Activated CD4-positive, alpha-beta T cell treated with anti-CD3 and anti-CD28 coated beads, Interleukin-2, amount 10 ng/mL, durations not matched to agents 24 days and 14 days (primary cell): ENCODE measurements at regions of chr4 and their contacts with region 1.

Region 1: DNA sequence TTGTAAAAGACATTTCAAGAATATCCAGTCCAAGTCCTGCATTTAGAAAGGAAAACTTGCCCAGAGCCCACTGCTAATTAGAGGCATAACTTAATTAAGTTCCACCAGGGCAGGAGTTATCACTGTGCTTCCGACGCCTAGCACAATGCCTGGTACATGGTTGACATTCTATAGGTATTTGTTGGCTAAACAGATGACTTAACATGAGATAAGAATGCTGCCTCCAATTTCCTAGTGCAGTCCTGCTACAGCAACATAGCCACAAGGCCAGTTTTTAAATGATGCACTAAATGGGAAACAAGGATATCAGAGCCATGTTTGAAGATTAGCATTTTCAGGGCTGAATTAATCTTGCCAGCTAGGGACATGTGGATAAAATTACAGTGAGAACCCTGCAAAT is 164.1 kb downstream of the RASL11B start:
- DNase-seq: no peak
- H3K4me3 Mint-ChIP-seq: no peak overlapping the region
- H3K27ac Mint-ChIP-seq: no peak overlapping the region
- H3K4me1 Mint-ChIP-seq: no peaks in the 10 kb centered on the region
- H3K27me3 Mint-ChIP-seq: no peaks in the 10 kb centered on the region

Region 2: GRCh38 chr4:52946855-52947254 is 79.4 kb before region 1 on chr4:
- intact Hi-C with region 1: no loop called
- DNase-seq: no peak
- H3K4me3 Mint-ChIP-seq: no peak overlapping the region
- H3K27ac Mint-ChIP-seq: no peak overlapping the region
- H3K4me1 Mint-ChIP-seq: no peaks in the 10 kb centered on the region
- H3K27me3 Mint-ChIP-seq: no peaks in the 10 kb centered on the region

Region 3: DNA sequence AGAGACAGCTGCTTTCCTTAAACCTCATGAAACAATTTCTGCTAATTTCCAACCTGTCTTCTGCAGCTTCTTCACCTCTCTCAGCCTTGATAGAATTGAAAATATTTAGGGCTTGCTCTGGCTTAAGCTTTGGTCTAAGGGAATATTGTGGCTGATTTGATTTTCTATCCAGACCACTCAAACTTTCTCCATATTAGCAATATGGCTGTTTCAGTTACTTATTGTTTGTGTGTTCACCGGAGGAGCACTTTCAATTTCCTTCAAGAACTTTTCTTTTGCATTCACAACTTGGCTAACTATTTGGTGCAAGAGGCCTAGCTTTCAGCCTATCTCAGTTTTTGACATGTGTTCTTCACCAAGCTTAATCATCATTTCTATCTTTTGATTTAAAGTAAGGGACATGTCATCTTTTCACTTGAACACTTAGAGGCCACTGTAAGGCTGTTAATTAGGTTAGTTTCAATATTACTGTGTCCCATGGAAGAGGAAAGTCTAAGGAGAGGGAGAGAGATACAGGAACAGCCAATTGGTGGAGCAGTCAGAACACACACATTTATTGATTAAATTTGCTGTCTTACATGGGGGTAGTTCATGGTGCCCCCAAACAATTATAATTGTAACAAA is 49.0 kb after region 1 on chr4:
- intact Hi-C with region 1: loop called (anchors 5 kb)
- DNase-seq: no peak
- H3K4me3 Mint-ChIP-seq: peak overlapping the region; percentile 56
- H3K27ac Mint-ChIP-seq: peak overlapping the region; percentile 82
- H3K4me1 Mint-ChIP-seq: peaks cover 8% of the 10 kb centered on the region
- H3K27me3 Mint-ChIP-seq: no peaks in the 10 kb centered on the region

Region 4: DNA sequence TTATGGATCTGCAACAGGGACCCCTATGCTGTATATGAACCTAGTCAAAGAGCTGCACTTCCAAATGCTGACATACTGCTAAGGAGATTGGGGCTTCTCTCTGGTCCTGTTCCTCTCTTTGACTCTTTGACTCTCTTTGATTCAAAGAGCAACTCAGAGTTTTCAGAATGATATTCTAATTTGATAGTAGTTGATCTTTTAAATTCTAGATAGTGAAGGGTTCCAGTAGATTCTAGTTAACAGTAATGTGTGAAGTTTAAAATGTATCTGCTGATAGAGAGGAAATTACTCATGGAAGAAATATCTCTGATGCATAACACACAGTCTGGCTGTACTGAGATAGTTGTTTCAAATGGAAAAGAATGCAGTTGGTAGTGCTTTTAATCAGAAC is 75.0 kb after region 1 on chr4:
- intact Hi-C with region 1: no loop called
- DNase-seq: no peak
- H3K4me3 Mint-ChIP-seq: no peak overlapping the region
- H3K27ac Mint-ChIP-seq: peak overlapping the region; percentile 70
- H3K4me1 Mint-ChIP-seq: peaks cover 11% of the 10 kb centered on the region
- H3K27me3 Mint-ChIP-seq: no peaks in the 10 kb centered on the region

Region 5: DNA sequence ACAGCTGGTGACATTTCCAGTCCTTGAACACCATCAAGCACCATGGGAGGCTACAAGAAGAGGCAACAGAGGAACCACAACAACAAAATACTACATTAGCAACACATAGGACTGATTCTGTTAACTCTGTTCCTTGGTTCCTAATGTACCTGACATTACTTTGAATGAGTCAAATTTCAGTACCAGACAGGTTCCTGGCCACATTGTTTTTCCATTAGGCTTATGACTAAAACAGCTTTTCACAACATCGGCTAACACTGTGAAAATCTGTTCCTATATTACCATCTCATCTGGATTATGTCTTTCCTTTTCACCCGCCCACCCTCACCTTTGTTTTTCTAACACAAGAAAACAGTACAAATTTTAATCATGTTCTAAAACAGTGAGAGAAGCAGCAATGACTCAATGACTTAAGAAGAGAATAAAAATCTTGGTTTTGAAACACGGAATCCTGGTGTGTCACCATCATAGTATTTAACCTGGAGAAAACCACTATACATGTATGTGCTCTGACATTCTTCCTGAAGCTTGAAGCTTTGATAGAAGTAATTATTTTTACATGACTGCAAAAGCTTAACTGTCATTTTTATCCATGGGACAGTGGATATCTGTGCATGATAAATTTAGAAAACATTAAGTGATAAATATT is 195.7 kb after region 1 on chr4:
- intact Hi-C with region 1: loop called (anchors 2 kb)
- DNase-seq: no peak
- H3K4me3 Mint-ChIP-seq: no peak overlapping the region
- H3K27ac Mint-ChIP-seq: no peak overlapping the region
- H3K4me1 Mint-ChIP-seq: peaks cover 5% of the 10 kb centered on the region
- H3K27me3 Mint-ChIP-seq: no peaks in the 10 kb centered on the region

Region 6: DNA sequence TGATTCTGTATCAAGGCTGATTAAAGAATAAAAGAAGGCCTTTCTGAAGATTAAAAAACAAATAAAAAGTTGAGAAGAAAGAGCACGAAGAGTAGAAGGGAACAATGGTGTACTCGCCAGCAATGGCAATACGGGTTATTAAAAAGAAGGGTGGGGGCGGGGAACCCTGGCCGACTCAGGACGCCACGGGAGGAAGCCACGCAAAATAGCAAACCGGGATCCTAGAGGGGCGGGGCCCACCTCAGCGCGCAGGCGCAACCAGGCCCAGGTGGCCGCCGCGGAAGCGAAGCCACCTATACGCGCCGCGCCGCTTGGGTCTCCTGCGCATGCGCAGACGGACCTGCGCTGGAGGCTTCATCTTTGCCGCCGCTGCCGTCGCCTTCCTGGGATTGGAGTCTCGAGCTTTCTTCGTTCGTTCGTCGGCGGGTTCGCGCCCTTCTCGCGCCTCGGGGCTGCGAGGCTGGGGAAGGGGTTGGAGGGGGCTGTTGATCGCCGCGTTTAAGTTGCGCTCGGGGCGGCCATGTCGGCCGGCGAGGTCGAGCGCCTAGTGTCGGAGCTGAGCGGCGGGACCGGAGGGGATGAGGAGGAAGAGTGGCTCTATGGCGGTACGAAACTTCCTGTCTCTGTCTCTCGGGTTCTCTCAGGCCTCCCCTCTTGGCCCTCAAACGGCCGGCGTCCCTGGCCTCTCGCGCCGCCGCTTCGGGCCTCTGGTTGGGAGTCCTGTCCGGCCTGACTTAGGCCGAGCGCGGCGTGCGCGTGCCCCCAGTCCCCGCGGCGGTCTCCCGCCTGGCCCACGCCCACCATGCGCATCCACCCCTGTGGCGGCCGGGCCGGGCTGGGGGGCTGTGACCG is 351.3 kb after region 1 on chr4 and contains the start of gene FIP1L1:
- intact Hi-C with region 1: loop called (anchors 5 kb)
- DNase-seq: peak; percentile 99
- H3K4me3 Mint-ChIP-seq: peak within 1 kb of the TSS; percentile 99
- H3K27ac Mint-ChIP-seq: peak within 1 kb of the TSS; percentile 98
- H3K4me1 Mint-ChIP-seq: peaks cover 26% of the 10 kb centered on the region
- H3K27me3 Mint-ChIP-seq: peaks cover 6% of the 10 kb centered on the region
- total RNA-seq, gene FIP1L1: 111 and 114 TPM in 2 replicates